OCI-LY7 (cell line): ENCODE measurements at regions of chr17 and their contacts with region 1.

Region 1: DNA sequence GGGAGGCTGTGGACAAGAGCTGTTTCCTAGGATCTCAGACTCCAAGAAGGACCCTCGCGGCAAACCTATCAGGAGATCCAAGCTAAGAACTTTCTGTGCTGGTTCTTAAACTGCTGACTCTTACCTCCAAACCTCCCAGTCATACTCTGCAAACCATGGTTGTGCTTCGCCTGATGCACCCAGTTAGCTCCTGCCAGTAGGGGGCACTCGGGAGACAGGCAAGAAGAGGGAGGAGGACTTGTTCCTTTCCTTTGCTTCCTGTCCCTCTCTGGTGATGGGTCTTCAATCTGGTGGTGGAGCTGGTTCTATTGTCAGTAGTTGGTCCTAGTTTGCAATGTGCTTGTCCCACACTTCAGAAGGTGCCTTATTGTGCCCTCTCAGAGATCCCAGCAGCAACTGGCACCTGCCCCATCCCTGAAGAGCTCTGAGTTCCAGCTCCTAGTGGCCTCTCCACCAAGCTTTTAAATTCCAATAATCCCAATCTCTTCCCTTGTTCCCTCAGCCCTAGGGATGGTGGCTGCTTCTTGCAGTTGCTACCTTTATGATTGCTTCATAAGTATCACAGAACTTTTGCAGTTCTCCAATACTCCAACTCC is 113.5 kb upstream of the RPL38 start:
- DNase-seq: peak; percentile 61
- H3K4me3 ChIP-seq: no peak overlapping the region
- H3K27ac ChIP-seq: no peak overlapping the region
- H3K4me1 ChIP-seq: no peaks in the 10 kb centered on the region
- CTCF ChIP-seq: peak; percentile 94

Region 2: GRCh38 chr17:74176546-74177001 is 86.6 kb after region 1 on chr17:
- CTCF ChIA-PET with region 1: no interaction called
- POLR2A ChIA-PET with region 1: no interaction called
- intact Hi-C with region 1: loop called (anchors 1 kb)
- DNase-seq: peak; percentile 63
- H3K4me3 ChIP-seq: no peak overlapping the region
- H3K27ac ChIP-seq: no peak overlapping the region
- H3K4me1 ChIP-seq: no peaks in the 10 kb centered on the region
- CTCF ChIP-seq: peak; percentile 98

Region 3: GRCh38 chr17:74199306-74200092 is 109.5 kb after region 1 on chr17:
- CTCF ChIA-PET with region 1: no interaction called
- POLR2A ChIA-PET with region 1: no interaction called
- intact Hi-C with region 1: loop called (anchors 1 kb)
- DNase-seq: peak; percentile 64
- H3K4me3 ChIP-seq: no peak overlapping the region
- H3K27ac ChIP-seq: no peak overlapping the region
- H3K4me1 ChIP-seq: peaks cover 4% of the 10 kb centered on the region
- CTCF ChIP-seq: peak; percentile 100